ENCODE measurements at regions of chr15 and their contacts with region 1.

Region 1: DNA sequence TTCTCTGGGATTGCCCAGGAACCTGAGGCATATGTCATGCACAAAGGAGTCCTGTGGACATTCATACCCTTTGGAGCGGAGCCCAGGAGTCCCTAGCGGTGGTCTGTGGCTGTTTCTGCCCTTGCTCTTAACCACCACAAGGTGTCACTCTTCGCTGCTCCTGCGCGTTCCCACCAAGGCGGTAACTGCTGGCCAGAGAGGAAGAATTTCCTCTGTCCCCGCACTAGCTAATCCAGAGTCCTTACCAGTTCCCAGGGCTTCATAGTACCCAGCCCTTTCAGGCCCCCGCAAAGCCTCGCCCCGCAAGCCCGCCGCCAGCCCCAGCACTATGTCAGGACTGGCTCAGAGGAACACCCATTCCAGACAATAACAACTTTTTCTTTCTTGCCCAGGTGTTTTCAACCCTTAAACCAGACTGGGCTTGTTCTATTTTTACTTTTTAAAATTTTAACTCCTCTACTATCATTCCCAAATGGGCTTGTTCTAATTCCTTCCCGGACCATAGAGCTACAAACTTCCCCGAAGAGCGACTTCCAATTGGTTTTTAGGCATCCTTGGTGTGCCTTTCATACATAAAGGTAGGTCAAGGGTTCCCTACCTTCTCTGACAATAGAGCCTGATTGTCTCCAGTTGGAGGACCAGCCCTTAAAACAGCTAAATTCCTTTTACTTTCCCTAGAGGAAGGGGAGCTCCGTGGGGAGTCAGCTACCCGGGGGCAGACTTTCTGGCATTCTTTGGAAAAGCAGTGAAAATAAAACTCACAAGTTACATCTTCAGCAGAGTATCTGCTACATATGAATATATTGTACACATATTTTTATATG is 31.8 kb upstream of the ZNF774 start:
- DNase-seq: peak; percentile 75
- H3K4me3 Mint-ChIP-seq: no peak overlapping the region
- H3K27ac Mint-ChIP-seq: no peak overlapping the region
- H3K4me1 Mint-ChIP-seq: peaks cover 4% of the 10 kb centered on the region
- H3K27me3 Mint-ChIP-seq: no peaks in the 10 kb centered on the region

Region 2: GRCh38 chr15:90300988-90301706 is 19.1 kb before region 1 on chr15:
- CTCF ChIA-PET with region 1: interaction called, 44 read pairs
- intact Hi-C with region 1: no loop called
- DNase-seq: peak; percentile 70
- H3K4me3 Mint-ChIP-seq: no peak overlapping the region
- H3K27ac Mint-ChIP-seq: no peak overlapping the region
- H3K4me1 Mint-ChIP-seq: peaks cover 15% of the 10 kb centered on the region
- H3K27me3 Mint-ChIP-seq: no peaks in the 10 kb centered on the region

Region 3: GRCh38 chr15:90336705-90337141 is 16.4 kb after region 1 on chr15:
- CTCF ChIA-PET with region 1: interaction called, 17 read pairs
- intact Hi-C with region 1: no loop called
- DNase-seq: peak; percentile 48
- H3K4me3 Mint-ChIP-seq: no peak overlapping the region
- H3K27ac Mint-ChIP-seq: no peak overlapping the region
- H3K4me1 Mint-ChIP-seq: peaks cover 12% of the 10 kb centered on the region
- H3K27me3 Mint-ChIP-seq: no peaks in the 10 kb centered on the region

Region 4: DNA sequence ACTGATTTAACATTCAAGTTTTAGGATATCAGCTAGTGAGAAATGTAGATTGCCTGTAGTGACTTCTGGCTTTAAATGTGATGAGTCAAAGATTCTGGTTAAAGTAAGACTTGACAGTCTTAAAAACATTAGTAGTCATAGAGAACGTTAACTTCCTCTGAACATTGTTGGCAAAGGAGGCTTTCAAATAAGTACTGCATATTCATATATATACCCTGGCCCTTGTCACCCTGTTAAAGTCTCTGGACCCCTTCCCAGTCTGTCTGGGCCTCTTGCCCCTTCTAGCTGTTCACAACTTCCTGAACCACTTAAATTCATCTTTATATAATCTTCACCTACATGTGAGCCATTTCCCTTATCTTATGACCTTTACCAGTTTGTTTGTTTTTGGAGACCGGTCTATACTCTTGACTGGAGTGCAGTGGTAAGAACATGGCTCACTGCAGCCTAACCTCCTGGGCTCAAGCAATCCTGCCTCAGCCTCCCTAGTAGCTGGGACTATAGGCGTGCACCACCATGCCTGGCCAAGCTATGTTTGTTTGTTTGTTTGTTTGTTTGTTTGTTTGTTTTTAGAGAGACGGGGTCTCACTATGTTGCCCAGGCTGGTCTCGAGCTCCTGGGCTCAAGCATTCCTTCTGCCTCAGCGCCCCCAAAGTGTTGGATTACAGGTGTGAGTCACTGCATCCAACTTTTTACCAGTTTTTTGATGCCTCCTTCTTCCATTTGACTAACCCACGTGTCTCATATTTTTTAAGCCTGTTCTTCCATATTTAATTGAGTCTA is 145.1 kb after region 1 on chr15:
- CTCF ChIA-PET with region 1: interaction called, 15 read pairs
- intact Hi-C with region 1: no loop called
- DNase-seq: peak; percentile 11
- H3K4me3 Mint-ChIP-seq: no peak overlapping the region
- H3K27ac Mint-ChIP-seq: peak overlapping the region; percentile 32
- H3K4me1 Mint-ChIP-seq: peaks cover 3% of the 10 kb centered on the region
- H3K27me3 Mint-ChIP-seq: no peaks in the 10 kb centered on the region

Region 5: DNA sequence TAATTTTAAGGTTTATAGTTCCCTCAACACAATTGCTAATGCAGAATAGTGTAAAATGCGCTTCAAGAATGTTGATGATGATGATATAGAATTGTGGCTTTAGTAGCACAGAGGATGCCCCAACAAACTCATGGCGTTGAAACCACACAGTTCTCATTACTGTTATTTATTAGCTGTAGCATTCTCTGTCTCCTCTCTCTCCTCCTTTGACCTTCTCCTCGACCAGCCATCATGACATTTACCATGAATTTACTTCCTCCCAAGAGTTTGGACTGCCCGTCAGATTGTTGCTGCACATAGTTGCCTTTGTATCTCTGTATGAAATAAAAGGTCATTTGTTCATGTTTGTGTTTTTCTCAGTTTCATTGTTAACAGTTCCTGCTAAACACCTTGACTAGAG is 181.6 kb after region 1 on chr15:
- CTCF ChIA-PET with region 1: interaction called, 12 read pairs
- intact Hi-C with region 1: no loop called
- DNase-seq: no peak
- H3K4me3 Mint-ChIP-seq: no peak overlapping the region
- H3K27ac Mint-ChIP-seq: no peak overlapping the region
- H3K4me1 Mint-ChIP-seq: no peaks in the 10 kb centered on the region
- H3K27me3 Mint-ChIP-seq: no peaks in the 10 kb centered on the region

Region 6: DNA sequence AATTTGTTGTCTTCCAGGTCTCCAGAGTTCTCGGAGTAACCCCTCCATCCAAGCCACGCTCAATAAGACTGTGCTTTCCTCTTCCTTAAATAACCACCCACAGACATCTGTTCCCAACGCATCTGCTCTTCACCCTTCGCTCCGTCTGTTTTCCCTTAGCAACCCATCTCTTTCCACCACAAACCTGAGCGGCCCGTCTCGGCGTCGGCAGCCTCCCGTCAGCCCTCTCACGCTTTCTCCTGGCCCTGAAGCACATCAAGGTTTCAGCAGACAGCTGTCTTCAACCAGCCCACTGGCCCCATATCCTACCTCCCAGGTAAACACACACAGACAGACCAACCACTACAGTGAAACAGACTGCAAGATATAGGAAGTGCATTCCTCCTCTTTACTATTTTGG is 308.9 kb after region 1 on chr15:
- CTCF ChIA-PET with region 1: interaction called, 3 read pairs
- intact Hi-C with region 1: loop called (anchors 5 kb)
- DNase-seq: no peak
- H3K4me3 Mint-ChIP-seq: no peak overlapping the region
- H3K27ac Mint-ChIP-seq: peak overlapping the region; percentile 29
- H3K4me1 Mint-ChIP-seq: peaks cover 6% of the 10 kb centered on the region
- H3K27me3 Mint-ChIP-seq: no peaks in the 10 kb centered on the region

Region 7: DNA sequence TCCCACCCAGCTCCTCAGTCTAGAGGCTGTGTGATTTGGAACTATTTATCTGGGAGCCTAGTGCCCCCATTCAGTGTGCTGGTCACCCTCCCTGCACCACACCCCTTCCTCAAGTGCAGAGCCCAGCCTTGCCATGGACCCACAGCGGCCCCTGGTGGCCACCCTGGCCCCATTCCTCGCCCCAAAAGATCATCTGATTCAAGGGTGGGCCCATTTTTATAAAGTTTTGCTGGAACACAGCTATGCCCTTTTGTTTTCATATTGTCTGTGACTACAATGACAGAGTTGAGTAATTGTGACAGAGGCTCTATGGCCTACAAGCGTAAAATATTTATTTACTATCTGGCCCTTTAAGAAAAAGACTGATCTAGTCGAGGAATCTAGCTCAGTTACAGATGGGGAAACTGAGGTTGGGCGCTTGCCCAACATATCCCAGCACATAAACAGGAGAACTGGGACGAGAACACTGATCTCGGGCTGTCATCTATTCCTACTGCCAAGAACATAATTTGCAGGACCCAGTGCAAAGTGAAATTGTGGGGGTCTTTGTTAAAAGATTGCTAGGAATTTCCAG is 565.9 kb after region 1 on chr15:
- CTCF ChIA-PET with region 1: interaction called, 4 read pairs
- intact Hi-C with region 1: loop called (anchors 2 kb)
- DNase-seq: peak; percentile 88
- H3K4me3 Mint-ChIP-seq: no peak overlapping the region
- H3K27ac Mint-ChIP-seq: peak overlapping the region; percentile 13
- H3K4me1 Mint-ChIP-seq: peaks cover 26% of the 10 kb centered on the region
- H3K27me3 Mint-ChIP-seq: peaks cover 3% of the 10 kb centered on the region